ENCODE measurements at regions of chr16 and their contacts with region 1.

Region 1: DNA sequence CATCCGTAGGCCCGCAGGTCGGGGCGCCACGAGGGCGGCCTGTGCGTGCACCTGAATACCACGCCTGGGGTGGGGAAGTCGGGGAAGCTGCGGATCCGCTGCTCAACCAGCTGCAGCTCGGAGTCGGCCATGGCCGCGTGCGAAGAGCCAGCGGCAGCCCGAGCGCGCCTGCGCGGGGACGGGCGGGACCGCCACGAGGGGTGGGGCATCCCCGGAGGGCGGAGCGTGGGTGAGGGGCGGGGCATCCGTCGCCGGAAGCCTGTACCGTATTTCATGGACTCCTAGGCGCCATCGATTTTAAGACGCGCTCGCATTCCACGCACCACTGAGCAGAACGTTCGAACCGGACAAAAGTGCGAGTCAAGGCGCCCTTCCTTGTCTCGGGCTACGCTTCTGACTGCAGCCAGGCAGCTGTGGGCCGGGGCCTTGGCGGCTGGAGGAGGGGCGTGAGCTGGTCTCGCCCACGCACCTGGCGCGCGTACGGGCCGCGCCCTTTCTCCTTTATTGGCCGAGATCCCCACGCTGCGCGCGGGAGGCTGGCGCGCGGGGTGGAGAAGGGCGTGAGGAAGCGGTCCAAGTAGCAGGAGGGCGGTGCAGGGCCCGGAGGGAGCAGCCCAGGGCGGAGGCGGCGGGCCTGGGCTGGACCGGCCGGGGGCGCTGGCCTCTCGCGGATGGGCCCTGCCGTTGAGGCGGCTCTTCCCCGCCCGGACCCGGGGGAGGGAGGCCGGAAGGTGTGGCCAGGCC is at the start of gene APRT:
- DNase-seq: peak; percentile 85 to 99
- H3K4me3 ChIP-seq: peak within 1 kb of the TSS; percentile 91
- H3K27ac ChIP-seq: peak within 1 kb of the TSS; percentile 78
- H3K4me1 ChIP-seq: peaks cover 16% of the 10 kb centered on the region; the same call in 1 of the 2 replicates
- H3K27me3 ChIP-seq: no peaks in the 10 kb centered on the region
- CTCF ChIP-seq: peak; percentile 45; the same call in 1 of the 2 replicates
- total RNA-seq, gene APRT: 213 and 226 TPM in 2 replicates

Region 2: GRCh38 chr16:88856828-88857733 is 45.1 kb after region 1 on chr16 and contains the starts of genes GALNS and TRAPPC2L:
- CTCF ChIA-PET with region 1: no interaction called
- POLR2A ChIA-PET with region 1: no interaction called
- intact Hi-C with region 1: loop called (anchors 1 kb)
- DNase-seq: peak; percentile 77 to 99
- H3K4me3 ChIP-seq: peak within 1 kb of the TSS; percentile 80
- H3K27ac ChIP-seq: no peak within 1 kb of the TSS
- H3K4me1 ChIP-seq: peaks cover 5% of the 10 kb centered on the region
- H3K27me3 ChIP-seq: no peaks in the 10 kb centered on the region
- CTCF ChIP-seq: no peak
- total RNA-seq, gene GALNS: 62.3 and 75.7 TPM in 2 replicates
- total RNA-seq, gene TRAPPC2L: 82.6 and 101 TPM in 2 replicates

Region 3: DNA sequence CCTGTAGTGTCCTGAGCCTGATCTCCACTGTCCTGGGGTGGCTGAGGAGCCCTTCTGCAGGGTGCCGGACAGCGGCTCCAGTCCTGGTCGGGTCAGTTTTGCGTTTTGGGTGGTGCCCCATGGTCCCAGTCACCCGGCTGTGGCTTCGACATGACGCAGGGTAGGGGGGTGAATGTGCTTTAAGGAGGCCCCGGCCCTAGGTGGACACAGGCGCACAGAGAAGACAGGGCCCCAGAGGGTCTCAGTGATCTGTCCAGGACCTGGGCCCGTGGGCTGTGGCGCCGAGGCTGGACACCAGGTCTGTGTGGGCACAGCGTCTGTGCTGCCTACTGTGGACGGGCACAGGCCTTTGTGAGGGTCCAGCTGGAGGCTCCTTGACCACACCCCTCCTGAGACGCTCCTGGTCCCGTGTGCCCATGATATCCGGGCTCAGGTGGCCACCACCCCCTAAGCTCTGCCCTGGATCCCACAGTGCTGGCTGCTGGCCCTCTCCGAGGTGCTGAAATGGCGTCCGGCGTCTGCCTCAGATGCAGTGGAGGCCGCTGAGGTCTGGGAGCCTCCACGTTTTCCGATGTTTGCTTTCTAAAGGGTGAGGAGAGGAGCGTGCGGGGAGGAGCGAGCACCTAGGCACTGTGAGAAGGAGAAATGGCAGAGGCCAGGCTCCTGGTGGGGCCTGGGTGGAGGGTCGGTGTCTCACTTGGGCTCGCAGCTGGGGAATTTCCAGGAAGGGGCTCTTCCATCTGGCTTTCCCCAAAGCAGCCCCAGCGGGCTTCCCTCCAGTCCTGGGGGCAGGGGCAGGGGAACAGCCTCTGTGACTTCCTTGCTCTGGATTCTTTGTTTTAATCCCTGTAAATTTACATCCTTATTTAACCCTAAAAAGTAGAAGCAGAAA is 225.6 kb after region 1 on chr16:
- CTCF ChIA-PET with region 1: no interaction called
- POLR2A ChIA-PET with region 1: no interaction called
- intact Hi-C with region 1: no loop called
- DNase-seq: peak in 1 of 2 experiments; percentile 42
- H3K4me3 ChIP-seq: no peak overlapping the region
- H3K27ac ChIP-seq: no peak overlapping the region
- H3K4me1 ChIP-seq: no peaks in the 10 kb centered on the region
- H3K27me3 ChIP-seq: peaks cover 97% of the 10 kb centered on the region
- CTCF ChIP-seq: no peak